Naive thymus-derived CD4-positive, alpha-beta T cell (primary cell): ENCODE measurements at regions of chr2 and their contacts with region 1.

Region 1: DNA sequence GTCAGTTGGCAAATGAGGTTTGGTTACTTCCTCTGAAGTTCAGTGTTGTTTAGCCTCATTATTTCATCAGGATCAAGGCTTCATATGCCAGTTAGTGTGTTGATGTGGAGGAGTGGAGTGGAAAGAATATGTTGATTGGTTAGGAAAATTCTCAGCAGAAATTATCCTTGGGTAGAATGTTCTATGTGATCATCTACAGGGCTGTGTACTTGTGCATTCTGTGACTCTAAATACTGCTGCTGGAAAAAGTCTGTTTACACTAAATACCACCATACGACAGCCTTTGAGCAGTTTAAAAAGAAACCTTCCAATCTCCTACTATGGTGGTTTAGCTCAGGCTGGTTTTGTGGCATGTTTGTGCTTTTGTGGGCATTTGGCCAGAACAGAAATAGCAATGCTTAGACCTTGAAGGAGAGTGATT is 25.8 kb downstream of the CAB39 start:
- DNase-seq: no peak
- ATAC-seq: no peak
- H3K4me3 ChIP-seq: no peak overlapping the region
- H3K4me3 Mint-ChIP-seq: peak overlapping the region; percentile 1 to 63 (median 42)
- H3K27ac ChIP-seq: no peak overlapping the region
- H3K27ac Mint-ChIP-seq: peak overlapping the region in 8 of 9 donors; percentile 14 to 74 (median 42)
- H3K4me1 ChIP-seq: peaks cover 30 to 46% of the 10 kb centered on the region in 2 donors
- H3K4me1 Mint-ChIP-seq: peaks cover 56 to 88% (median 83%) of the 10 kb centered on the region in 7 donors
- H3K27me3 ChIP-seq: no peaks in the 10 kb centered on the region
- H3K27me3 Mint-ChIP-seq: no peaks in the 10 kb centered on the region

Region 2: DNA sequence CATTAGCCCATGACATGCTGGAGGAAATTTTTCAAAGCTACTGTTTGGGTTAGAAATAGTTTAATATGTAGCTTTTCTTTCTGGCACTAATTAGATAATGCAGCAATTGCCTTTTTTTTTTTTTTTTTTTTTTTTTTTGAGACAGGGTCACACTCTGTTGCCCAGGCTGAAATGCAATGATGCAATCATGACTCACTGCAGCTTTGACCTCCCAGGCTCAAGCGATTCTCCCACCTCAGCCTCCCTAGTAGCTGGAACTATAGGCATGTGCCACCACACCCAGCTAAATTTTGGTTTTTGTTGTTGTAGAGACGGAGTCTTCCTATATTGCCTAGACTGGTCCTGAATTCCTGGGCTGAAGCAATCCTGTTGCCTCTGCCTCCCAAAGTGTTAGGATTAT is 186.2 kb before region 1 on chr2:
- CTCF ChIA-PET with region 1: no interaction called
- POLR2A ChIA-PET with region 1: no interaction called
- intact Hi-C with region 1: no loop called
- DNase-seq: no peak
- ATAC-seq: no peak
- H3K4me3 ChIP-seq: no peak overlapping the region
- H3K4me3 Mint-ChIP-seq: no peak overlapping the region
- H3K27ac ChIP-seq: no peak overlapping the region
- H3K27ac Mint-ChIP-seq: peak overlapping the region in 1 of 9 donors; percentile 64
- H3K4me1 ChIP-seq: peaks cover 4% of the 10 kb centered on the region in 2 donors
- H3K4me1 Mint-ChIP-seq: peaks cover 9 to 13% (median 10%) of the 10 kb centered on the region in 7 donors
- H3K27me3 ChIP-seq: no peaks in the 10 kb centered on the region
- H3K27me3 Mint-ChIP-seq: peaks cover 0 to 3% (median 0%) of the 10 kb centered on the region in 5 donors

Region 3: DNA sequence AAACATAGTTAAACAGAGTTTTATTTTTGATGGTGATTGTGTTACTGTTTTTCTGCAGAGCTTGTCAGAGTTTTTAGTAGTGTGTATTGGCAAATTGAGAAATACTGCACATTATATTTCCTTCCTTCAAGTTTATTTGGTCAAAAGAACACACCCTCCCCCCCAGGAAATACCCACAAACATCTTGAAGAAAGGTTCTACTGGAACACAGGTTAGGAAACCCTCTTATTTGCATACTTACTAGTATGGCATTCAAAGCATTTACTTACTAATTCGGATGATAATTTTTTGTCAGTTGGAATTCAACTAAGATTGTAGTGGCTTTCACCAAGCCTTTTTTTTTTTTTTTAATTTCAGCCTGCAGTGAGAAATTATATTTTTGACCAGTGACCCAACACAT is 16.7 kb before region 1 on chr2:
- CTCF ChIA-PET with region 1: interaction called, 5 read pairs
- POLR2A ChIA-PET with region 1: interaction called, 4 read pairs
- intact Hi-C with region 1: loop called in 1 of 2 experiments (anchors 1 kb)
- DNase-seq: peak in 4 of 9 donors; percentile 8 to 25 (median 22)
- ATAC-seq: no peak
- H3K4me3 ChIP-seq: no peak overlapping the region
- H3K4me3 Mint-ChIP-seq: peak overlapping the region; percentile 38 to 85 (median 64)
- H3K27ac ChIP-seq: peak overlapping the region; percentile 55
- H3K27ac Mint-ChIP-seq: peak overlapping the region; percentile 4 to 94 (median 80)
- H3K4me1 ChIP-seq: peaks cover 76 to 80% of the 10 kb centered on the region in 2 donors
- H3K4me1 Mint-ChIP-seq: peaks cover 61 to 97% (median 87%) of the 10 kb centered on the region in 7 donors
- H3K27me3 ChIP-seq: no peaks in the 10 kb centered on the region
- H3K27me3 Mint-ChIP-seq: no peaks in the 10 kb centered on the region

Region 4: GRCh38 chr2:230849633-230850357 is 111.4 kb after region 1 on chr2:
- CTCF ChIA-PET with region 1: no interaction called
- POLR2A ChIA-PET with region 1: no interaction called
- intact Hi-C with region 1: no loop called
- DNase-seq: peak in 8 of 9 donors; percentile 46 to 82 (median 56)
- ATAC-seq: peak; percentile 64
- H3K4me3 ChIP-seq: no peak overlapping the region
- H3K4me3 Mint-ChIP-seq: no peak overlapping the region
- H3K27ac ChIP-seq: no peak overlapping the region
- H3K27ac Mint-ChIP-seq: peak overlapping the region in 3 of 9 donors; percentile 29 to 46 (median 45)
- H3K4me1 ChIP-seq: peaks cover 0 to 3% of the 10 kb centered on the region in 2 donors
- H3K4me1 Mint-ChIP-seq: peaks cover 3 to 12% (median 6%) of the 10 kb centered on the region in 7 donors
- H3K27me3 ChIP-seq: no peaks in the 10 kb centered on the region
- H3K27me3 Mint-ChIP-seq: peaks cover 10 to 74% (median 38%) of the 10 kb centered on the region in 5 donors